Panc1 (cell line): ENCODE measurements at regions of chr10 and their contacts with region 1.

Region 1: DNA sequence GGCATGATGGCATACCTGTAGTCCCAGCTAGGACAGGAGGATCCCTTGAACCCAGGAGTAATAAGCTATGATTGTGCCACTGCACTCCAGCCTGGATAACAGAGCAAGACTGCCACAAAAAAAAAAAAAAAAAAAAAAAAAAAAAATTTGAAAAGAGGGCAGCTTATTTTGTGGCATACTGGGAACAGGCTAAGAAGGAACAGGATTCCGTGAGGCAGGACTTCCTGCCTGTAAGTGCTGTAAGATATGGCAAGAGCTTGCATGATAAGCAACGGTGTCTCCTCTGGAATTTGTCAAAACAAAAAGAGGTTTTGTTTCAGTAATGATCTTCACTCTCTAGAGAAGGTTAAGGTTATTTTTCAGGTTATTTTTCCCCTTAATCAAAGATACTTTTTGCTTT is 101.1 kb downstream of the ABCC2 start:
- DNase-seq: no peak
- ATAC-seq: no peak
- H3K4me3 ChIP-seq: no peak overlapping the region
- H3K27ac ChIP-seq: no peak overlapping the region
- H3K4me1 ChIP-seq: no peaks in the 10 kb centered on the region
- H3K27me3 ChIP-seq: no peaks in the 10 kb centered on the region
- CTCF ChIP-seq: no peak

Region 2: DNA sequence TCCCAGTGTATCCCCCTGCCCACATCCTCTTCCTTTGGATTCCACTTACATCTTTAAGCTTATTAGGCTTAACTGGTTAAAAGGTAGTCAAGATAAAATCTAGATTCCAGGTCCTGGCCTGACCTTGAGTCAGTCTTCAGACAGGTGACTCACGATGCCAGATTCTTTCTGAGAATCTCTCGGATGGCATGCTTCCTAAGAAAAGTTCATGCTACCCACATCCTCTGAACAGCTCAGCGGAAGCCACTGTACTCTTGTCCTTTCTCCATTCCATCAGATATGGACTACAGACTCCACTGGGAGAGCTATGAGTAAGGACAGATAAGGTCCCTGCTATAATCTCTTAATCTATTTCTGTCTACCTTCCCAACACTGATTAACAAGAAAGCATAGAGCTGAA is 82.8 kb after region 1 on chr10:
- CTCF ChIA-PET with region 1: interaction called, 16 read pairs
- POLR2A ChIA-PET with region 1: no interaction called
- in situ Hi-C with region 1: no loop called
- intact Hi-C with region 1: no loop called
- DNase-seq: peak; percentile 87
- ATAC-seq: peak; percentile 91
- H3K4me3 ChIP-seq: no peak overlapping the region; a peak in 1 of 4 replicates
- H3K27ac ChIP-seq: peak overlapping the region; percentile 82
- H3K4me1 ChIP-seq: peaks cover 43% of the 10 kb centered on the region
- H3K27me3 ChIP-seq: no peaks in the 10 kb centered on the region
- CTCF ChIP-seq: no peak

Region 3: GRCh38 chr10:100140070-100140469 is 256.5 kb after region 1 on chr10:
- CTCF ChIA-PET with region 1: no interaction called
- POLR2A ChIA-PET with region 1: no interaction called
- in situ Hi-C with region 1: no loop called
- intact Hi-C with region 1: no loop called
- DNase-seq: no peak
- ATAC-seq: no peak
- H3K4me3 ChIP-seq: no peak overlapping the region
- H3K27ac ChIP-seq: no peak overlapping the region
- H3K4me1 ChIP-seq: no peaks in the 10 kb centered on the region
- H3K27me3 ChIP-seq: no peaks in the 10 kb centered on the region; the same call in 1 of the 2 replicates
- CTCF ChIP-seq: no peak